MCF 10A (cell line): ENCODE measurements at regions of chr11 and their contacts with region 1.

Region 1: DNA sequence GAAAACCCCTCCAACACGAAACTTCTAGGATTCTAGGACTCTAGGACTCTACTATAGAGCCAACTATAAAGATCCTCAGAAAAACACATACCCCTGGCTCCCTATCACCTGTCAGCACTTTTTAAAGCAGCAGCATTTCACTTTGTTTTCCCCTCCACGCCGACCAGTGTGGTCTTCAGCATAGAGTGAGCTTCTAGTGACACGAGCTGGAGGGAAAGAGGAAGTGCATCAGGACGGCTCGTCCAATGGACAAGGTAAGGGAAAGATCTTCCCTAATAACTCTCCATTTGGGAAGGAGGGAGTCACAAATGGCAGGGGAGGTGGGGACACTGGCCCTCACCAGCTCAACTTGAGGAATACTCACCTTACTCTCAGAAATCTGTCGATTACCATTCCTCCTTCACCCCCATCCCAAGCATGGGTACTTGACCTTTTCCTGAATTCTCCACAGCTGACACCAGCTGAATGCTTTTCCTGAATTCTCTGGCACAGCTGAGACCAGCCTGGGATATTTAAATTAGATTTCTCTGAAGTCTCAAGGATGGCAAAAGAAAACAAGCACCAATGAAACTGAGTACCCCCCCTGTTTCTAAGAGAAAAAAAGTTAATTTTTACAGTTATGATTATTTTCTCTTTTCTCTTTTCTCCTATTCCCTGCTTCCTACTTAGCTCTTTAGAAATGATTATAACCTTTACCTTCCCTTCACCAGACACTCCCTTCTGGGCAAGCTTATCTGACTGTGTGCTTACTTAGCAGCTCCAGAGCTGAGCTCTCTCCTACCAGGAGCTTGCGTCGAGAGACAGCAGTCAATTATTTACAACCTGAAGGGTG is 33.3 kb upstream of the NNMT start:
- DNase-seq: peak; percentile 51
- H3K4me3 Mint-ChIP-seq: no peak overlapping the region
- H3K27ac Mint-ChIP-seq: no peak overlapping the region
- H3K4me1 Mint-ChIP-seq: peaks cover 19% of the 10 kb centered on the region
- H3K27me3 Mint-ChIP-seq: no peaks in the 10 kb centered on the region
- CTCF ChIP-seq: peak; percentile 47

Region 2: GRCh38 chr11:113994077-113994954 is 268.6 kb before region 1 on chr11:
- CTCF ChIA-PET with region 1: interaction called, 82 read pairs
- POLR2A ChIA-PET with region 1: interaction called, 3 read pairs
- intact Hi-C with region 1: loop called (anchors 1 kb)
- DNase-seq: peak; percentile 36
- H3K4me3 Mint-ChIP-seq: no peak overlapping the region
- H3K27ac Mint-ChIP-seq: no peak overlapping the region
- H3K4me1 Mint-ChIP-seq: no peaks in the 10 kb centered on the region
- H3K27me3 Mint-ChIP-seq: peaks cover 74% of the 10 kb centered on the region
- CTCF ChIP-seq: peak; percentile 87

Region 3: DNA sequence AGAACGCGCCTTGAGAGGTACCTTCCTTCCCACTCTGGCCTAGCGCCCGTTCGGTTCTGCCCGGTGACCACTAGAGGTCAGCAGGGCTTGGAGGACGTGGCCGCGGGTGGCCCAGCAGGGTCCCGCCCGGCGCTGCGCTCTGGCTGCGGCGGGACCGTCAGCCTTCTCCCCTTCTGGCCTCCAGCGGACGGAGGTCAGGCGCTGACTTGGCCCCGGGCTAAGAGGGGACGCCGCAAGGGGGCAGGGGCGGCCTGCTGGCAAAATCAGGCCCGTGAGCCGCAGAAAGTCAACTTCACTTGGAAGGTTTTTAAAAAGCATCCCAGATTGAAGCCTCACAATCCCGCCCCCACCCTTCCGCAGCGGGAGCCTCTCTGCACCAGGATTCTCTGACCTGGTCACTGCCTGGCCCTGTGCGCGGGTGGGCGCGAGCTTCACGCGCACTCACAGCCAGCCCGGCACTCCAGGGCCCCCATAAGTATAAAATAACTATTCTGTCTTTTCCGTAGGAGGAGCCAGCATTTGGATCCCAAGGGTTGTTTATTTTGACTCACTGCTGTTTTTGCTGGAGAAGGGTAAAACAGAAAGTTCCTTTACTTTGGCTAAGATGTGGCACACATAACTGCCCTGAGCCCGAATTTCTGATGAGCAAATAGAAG is 226.6 kb before region 1 on chr11:
- CTCF ChIA-PET with region 1: interaction called, 48 read pairs
- POLR2A ChIA-PET with region 1: interaction called, 5 read pairs
- intact Hi-C with region 1: loop called (anchors 1 kb)
- DNase-seq: peak; percentile 84
- H3K4me3 Mint-ChIP-seq: peak overlapping the region; percentile 68
- H3K27ac Mint-ChIP-seq: peak overlapping the region; percentile 70
- H3K4me1 Mint-ChIP-seq: peaks cover 27% of the 10 kb centered on the region
- H3K27me3 Mint-ChIP-seq: no peaks in the 10 kb centered on the region
- CTCF ChIP-seq: peak; percentile 82

Region 4: GRCh38 chr11:114066046-114066648 is 196.8 kb before region 1 on chr11:
- CTCF ChIA-PET with region 1: interaction called, 26 read pairs
- POLR2A ChIA-PET with region 1: interaction called, 6 read pairs
- intact Hi-C with region 1: no loop called
- DNase-seq: no peak
- H3K4me3 Mint-ChIP-seq: peak overlapping the region; percentile 95
- H3K27ac Mint-ChIP-seq: no peak overlapping the region
- H3K4me1 Mint-ChIP-seq: peaks cover 41% of the 10 kb centered on the region
- H3K27me3 Mint-ChIP-seq: no peaks in the 10 kb centered on the region
- CTCF ChIP-seq: no peak

Region 5: DNA sequence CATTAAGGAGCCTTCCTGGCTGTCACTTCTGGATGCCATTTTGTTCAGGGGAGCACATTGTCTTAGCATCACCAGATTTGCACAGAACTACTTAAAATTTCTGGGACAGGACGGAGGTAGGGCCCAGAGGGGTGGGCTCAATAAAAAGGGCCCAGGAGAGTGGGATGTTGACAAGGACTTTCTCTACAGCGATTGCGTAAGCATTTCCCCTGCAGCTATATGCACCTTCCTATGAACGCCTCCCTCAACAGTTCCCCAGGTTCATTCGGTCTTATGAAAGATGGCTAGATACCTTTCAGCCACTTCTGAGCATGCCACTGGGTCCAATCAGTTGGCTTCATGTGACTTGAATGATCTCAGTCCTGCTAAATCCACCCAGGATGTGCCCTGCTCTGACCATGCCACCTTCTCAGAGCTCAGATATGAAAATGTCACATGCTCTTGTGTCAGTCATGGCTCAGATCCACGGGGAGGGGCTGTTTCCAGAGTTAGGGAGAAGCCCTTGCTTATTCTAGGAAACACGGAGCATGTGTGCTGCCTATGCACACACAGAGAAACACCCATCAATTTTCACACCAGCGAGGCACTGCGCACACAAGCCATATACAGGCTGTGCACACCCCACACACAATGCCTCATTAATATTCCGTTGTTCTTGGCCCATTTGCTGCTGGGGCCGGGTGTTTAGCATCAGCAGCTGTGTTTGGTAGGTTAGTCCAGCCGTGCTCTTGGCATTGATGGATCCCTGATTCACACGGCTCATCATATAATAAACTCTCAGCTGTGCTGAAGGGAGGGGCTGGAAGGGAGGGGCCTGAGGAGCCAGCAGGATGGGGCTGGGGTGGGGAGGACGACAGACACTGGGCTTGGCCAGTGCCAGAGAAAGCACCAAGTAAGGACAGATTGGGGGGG is 19.2 kb before region 1 on chr11:
- CTCF ChIA-PET with region 1: interaction called, 21 read pairs
- POLR2A ChIA-PET with region 1: interaction called, 10 read pairs
- intact Hi-C with region 1: no loop called
- DNase-seq: no peak
- H3K4me3 Mint-ChIP-seq: no peak overlapping the region
- H3K27ac Mint-ChIP-seq: peak overlapping the region; percentile 51
- H3K4me1 Mint-ChIP-seq: peaks cover 27% of the 10 kb centered on the region
- H3K27me3 Mint-ChIP-seq: no peaks in the 10 kb centered on the region
- CTCF ChIP-seq: no peak

Region 6: DNA sequence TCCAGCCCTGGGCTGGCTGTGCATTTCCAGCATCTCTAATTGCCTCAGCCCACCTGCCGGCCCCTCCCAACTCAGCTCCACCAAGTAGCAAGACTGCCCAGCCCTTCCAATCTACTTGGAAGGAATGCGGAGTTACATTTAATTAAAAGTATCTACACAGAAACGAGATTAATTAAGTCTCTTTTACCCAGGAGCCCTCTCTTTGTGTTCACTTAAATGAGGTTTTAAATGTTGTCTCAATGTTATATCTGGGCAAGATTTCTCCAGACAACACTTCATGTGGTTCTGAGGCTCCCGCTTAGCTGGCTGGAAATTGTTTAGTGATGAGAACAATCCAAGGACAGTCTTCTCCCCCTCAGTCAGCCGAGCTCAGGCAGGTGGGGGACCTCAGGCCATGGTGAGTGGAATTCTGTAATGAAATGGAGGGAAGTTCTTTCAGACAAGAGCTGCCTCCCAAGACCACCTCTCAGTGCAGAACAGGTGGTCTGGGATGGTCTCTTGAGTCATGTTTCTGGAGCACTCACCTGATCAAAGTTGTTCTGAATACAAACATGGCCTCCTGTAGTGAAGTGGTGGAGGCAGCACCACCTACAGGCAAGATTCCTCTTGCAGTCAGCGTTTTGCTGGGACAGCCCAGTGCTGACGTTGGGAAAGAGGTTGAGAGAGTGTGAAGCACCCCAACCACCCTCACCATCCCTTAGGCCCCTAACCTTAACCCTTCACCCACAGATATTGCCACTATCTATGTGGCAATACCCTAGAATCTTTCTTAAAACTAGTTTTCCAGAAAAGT is 869.7 kb after region 1 on chr11:
- CTCF ChIA-PET with region 1: no interaction called
- POLR2A ChIA-PET with region 1: no interaction called
- intact Hi-C with region 1: no loop called
- DNase-seq: peak; percentile 25
- H3K4me3 Mint-ChIP-seq: no peak overlapping the region
- H3K27ac Mint-ChIP-seq: no peak overlapping the region
- H3K4me1 Mint-ChIP-seq: no peaks in the 10 kb centered on the region
- H3K27me3 Mint-ChIP-seq: peaks cover 20% of the 10 kb centered on the region
- CTCF ChIP-seq: peak; percentile 23